WTC11 (cell line): ENCODE measurements at regions of chr15 and their contacts with region 1.

Region 1: GRCh38 chr15:25783607-25784540 is 79.3 kb downstream of the ATP10A start:
- DNase-seq: peak; percentile 86
- ATAC-seq: peak; percentile 80
- H3K4me3 Mint-ChIP-seq: no peak overlapping the region
- H3K27ac Mint-ChIP-seq: no peak overlapping the region
- H3K4me1 Mint-ChIP-seq: peaks cover 20% of the 10 kb centered on the region
- H3K27me3 Mint-ChIP-seq: no peaks in the 10 kb centered on the region
- CTCF ChIP-seq: peak; percentile 69

Region 2: GRCh38 chr15:25325187-25325586 is 458.7 kb before region 1 on chr15:
- CTCF ChIA-PET with region 1: no interaction called
- POLR2A ChIA-PET with region 1: no interaction called
- DNase-seq: no peak
- ATAC-seq: no peak
- H3K4me3 Mint-ChIP-seq: no peak overlapping the region
- H3K27ac Mint-ChIP-seq: no peak overlapping the region
- H3K4me1 Mint-ChIP-seq: peaks cover 20% of the 10 kb centered on the region
- H3K27me3 Mint-ChIP-seq: no peaks in the 10 kb centered on the region
- CTCF ChIP-seq: no peak

Region 3: DNA sequence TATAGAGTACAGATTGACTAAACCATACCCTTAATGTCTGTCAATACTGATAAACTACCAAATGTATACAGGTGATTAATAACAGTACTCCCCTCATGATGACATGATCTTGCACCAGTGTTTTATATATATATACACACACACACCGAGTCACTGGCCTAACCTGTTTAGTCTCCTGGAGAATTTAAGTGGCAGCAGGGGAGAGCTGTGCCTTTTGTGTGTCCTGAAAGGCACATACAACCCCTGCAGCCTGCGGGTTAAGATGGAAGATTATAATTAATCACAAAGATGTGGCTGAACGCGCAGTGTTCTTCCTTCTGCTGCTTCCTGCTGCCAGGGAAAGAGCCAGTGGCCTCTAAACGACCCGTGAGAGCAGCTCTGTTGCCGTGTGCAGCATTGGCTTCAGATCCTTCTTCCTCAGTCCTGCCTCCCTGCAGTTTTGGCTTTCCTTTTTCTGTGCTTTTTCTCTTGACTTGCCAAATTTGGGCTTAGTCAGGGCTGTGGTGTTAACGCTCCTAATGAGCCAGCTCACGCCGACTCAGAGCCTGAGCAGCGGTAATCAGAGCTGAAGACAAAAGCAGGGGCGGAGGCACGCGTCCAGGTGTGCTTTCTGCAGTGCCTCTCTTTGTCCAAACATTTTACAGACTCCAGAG is 302.5 kb before region 1 on chr15:
- CTCF ChIA-PET with region 1: no interaction called
- POLR2A ChIA-PET with region 1: no interaction called
- DNase-seq: peak; percentile 42
- ATAC-seq: peak; percentile 92
- H3K4me3 Mint-ChIP-seq: peak overlapping the region; percentile 33
- H3K27ac Mint-ChIP-seq: peak overlapping the region; percentile 84
- H3K4me1 Mint-ChIP-seq: peaks cover 25% of the 10 kb centered on the region
- H3K27me3 Mint-ChIP-seq: peaks cover 7% of the 10 kb centered on the region
- CTCF ChIP-seq: no peak

Region 4: GRCh38 chr15:25710184-25710583 is 73.7 kb before region 1 on chr15:
- CTCF ChIA-PET with region 1: interaction called, 17 read pairs
- POLR2A ChIA-PET with region 1: no interaction called
- DNase-seq: peak; percentile 81
- ATAC-seq: peak; percentile 93
- H3K4me3 Mint-ChIP-seq: no peak overlapping the region
- H3K27ac Mint-ChIP-seq: no peak overlapping the region
- H3K4me1 Mint-ChIP-seq: peaks cover 6% of the 10 kb centered on the region; the same call in 1 of the 2 replicates
- H3K27me3 Mint-ChIP-seq: no peaks in the 10 kb centered on the region
- CTCF ChIP-seq: peak; percentile 52; the same call in 1 of the 2 replicates

Region 5: DNA sequence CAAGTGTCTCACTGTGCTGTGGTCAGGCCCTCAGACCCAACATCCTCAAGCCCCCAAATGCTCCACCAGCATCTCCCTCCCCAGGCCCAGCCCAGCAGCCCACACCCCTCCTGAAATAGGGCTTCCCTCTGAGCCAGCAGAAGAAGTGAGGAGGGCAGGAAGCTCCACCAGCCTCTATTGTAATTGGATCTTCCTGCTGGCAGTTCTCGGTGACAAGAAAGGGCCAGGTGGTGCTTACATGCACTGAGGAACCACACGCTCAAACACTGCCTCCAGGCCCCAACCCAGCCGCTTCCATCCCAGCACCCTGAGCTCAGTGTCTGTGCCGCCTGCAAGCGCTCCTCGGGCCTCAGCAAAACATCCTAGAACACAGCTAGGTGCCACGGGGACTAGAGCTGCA is 17.5 kb before region 1 on chr15:
- CTCF ChIA-PET with region 1: interaction called, 13 read pairs
- POLR2A ChIA-PET with region 1: no interaction called
- DNase-seq: no peak
- ATAC-seq: peak; percentile 62
- H3K4me3 Mint-ChIP-seq: no peak overlapping the region
- H3K27ac Mint-ChIP-seq: no peak overlapping the region
- H3K4me1 Mint-ChIP-seq: peaks cover 9% of the 10 kb centered on the region
- H3K27me3 Mint-ChIP-seq: no peaks in the 10 kb centered on the region
- CTCF ChIP-seq: no peak

Region 6: GRCh38 chr15:25811481-25811906 is 27.6 kb after region 1 on chr15:
- CTCF ChIA-PET with region 1: interaction called, 21 read pairs
- POLR2A ChIA-PET with region 1: no interaction called
- DNase-seq: no peak
- ATAC-seq: no peak
- H3K4me3 Mint-ChIP-seq: no peak overlapping the region
- H3K27ac Mint-ChIP-seq: no peak overlapping the region
- H3K4me1 Mint-ChIP-seq: peaks cover 14% of the 10 kb centered on the region
- H3K27me3 Mint-ChIP-seq: no peaks in the 10 kb centered on the region
- CTCF ChIP-seq: no peak

Region 7: GRCh38 chr15:25892126-25892525 is 108.3 kb after region 1 on chr15:
- CTCF ChIA-PET with region 1: interaction called, 10 read pairs
- POLR2A ChIA-PET with region 1: no interaction called
- DNase-seq: no peak
- ATAC-seq: no peak
- H3K4me3 Mint-ChIP-seq: no peak overlapping the region
- H3K27ac Mint-ChIP-seq: no peak overlapping the region
- H3K4me1 Mint-ChIP-seq: peaks cover 4% of the 10 kb centered on the region
- H3K27me3 Mint-ChIP-seq: no peaks in the 10 kb centered on the region
- CTCF ChIP-seq: no peak

Region 8: GRCh38 chr15:26037369-26037768 is 253.5 kb after region 1 on chr15:
- CTCF ChIA-PET with region 1: no interaction called
- POLR2A ChIA-PET with region 1: no interaction called
- DNase-seq: no peak
- ATAC-seq: no peak
- H3K4me3 Mint-ChIP-seq: no peak overlapping the region
- H3K27ac Mint-ChIP-seq: no peak overlapping the region
- H3K4me1 Mint-ChIP-seq: peaks cover 7% of the 10 kb centered on the region
- H3K27me3 Mint-ChIP-seq: no peaks in the 10 kb centered on the region
- CTCF ChIP-seq: no peak

Region 9: GRCh38 chr15:26095710-26096330 is 311.9 kb after region 1 on chr15:
- CTCF ChIA-PET with region 1: interaction called, 18 read pairs
- POLR2A ChIA-PET with region 1: no interaction called
- DNase-seq: peak; percentile 73
- ATAC-seq: peak; percentile 97
- H3K4me3 Mint-ChIP-seq: no peak overlapping the region; the same call in 1 of the 2 replicates
- H3K27ac Mint-ChIP-seq: 0 out of 2 replicates have a peak overlapping the region, but pooled peaks have one; percentile 67
- H3K4me1 Mint-ChIP-seq: peaks cover 16% of the 10 kb centered on the region
- H3K27me3 Mint-ChIP-seq: no peaks in the 10 kb centered on the region; the same call in 1 of the 2 replicates
- CTCF ChIP-seq: peak; percentile 57; the same call in 1 of the 2 replicates